Activated B cell treated with CpG ODN at 0.5 μM for 24 hours (primary cell): ENCODE measurements at regions of chr9 and their contacts with region 1.

Region 1: GRCh38 chr9:134163353-134164196 is 789 bp downstream of the RNU6ATAC start:
- DNase-seq: peak; percentile 64
- ATAC-seq: peak; percentile 18
- H3K4me3 Mint-ChIP-seq: no peak overlapping the region
- H3K27ac Mint-ChIP-seq: no peak overlapping the region
- H3K4me1 Mint-ChIP-seq: peaks cover 9% of the 10 kb centered on the region
- H3K27me3 Mint-ChIP-seq: no peaks in the 10 kb centered on the region
- CTCF ChIP-seq: no peak

Region 2: GRCh38 chr9:134024828-134025605 is 138.6 kb before region 1 on chr9 and contains the start of gene BRD3OS:
- CTCF ChIA-PET with region 1: no interaction called
- POLR2A ChIA-PET with region 1: no interaction called
- intact Hi-C with region 1: loop called (anchors 1 kb)
- DNase-seq: peak; percentile 85
- ATAC-seq: peak; percentile 94
- H3K4me3 Mint-ChIP-seq: peak within 1 kb of the TSS; percentile 83
- H3K27ac Mint-ChIP-seq: peak within 1 kb of the TSS; percentile 61
- H3K4me1 Mint-ChIP-seq: peaks cover 16% of the 10 kb centered on the region
- H3K27me3 Mint-ChIP-seq: no peaks in the 10 kb centered on the region
- CTCF ChIP-seq: no peak
- total RNA-seq, gene BRD3OS: 17.3 and 19.3 TPM in 2 replicates

Region 3: DNA sequence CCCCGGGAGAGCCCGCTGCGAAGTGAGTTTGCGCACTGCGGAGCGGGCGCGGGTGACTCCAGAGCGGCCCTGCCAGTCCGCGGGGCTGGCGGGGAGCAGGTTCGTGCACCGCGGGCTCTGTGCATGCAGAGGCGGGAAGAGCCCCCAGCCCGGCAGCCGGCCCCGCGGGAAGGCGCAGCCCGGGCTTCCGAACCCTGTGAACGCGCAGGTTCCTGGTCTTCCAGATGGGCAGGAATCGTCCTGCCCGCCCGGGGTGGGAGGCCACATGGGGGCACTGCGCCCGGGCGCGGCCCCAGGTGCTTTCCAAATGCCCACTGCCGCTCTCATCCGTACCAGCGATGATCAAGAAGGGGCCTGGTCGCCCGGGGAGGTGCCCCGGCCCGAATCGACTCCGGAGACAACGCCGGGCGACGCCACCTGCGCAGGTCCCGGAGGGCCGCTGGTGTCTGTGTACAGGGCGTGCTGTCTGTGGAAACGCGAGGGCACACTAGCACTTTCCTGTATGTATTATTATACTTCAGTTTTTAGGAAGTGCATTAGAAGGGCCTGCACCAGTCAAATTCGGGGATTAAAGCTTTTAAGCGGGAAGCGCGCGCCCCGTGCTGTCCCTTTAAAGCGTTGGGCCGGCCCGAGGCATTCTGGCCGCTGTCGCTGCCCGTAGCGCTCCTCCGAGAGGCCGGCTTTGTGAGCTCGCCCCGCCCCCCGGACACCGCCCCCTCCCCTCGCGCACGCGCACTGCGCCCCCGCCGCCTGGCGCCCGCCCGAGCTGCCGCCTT is 28.0 kb before region 1 on chr9 and contains the start of gene WDR5:
- CTCF ChIA-PET with region 1: interaction called, 8 read pairs
- POLR2A ChIA-PET with region 1: interaction called, 21 read pairs
- intact Hi-C with region 1: loop called (anchors 1 kb)
- DNase-seq: peak; percentile 89
- ATAC-seq: peak; percentile 87
- H3K4me3 Mint-ChIP-seq: peak within 1 kb of the TSS; percentile 89
- H3K27ac Mint-ChIP-seq: peak within 1 kb of the TSS; percentile 90
- H3K4me1 Mint-ChIP-seq: peaks cover 35% of the 10 kb centered on the region
- H3K27me3 Mint-ChIP-seq: no peaks in the 10 kb centered on the region
- CTCF ChIP-seq: no peak
- total RNA-seq, gene WDR5: 20.8 and 22.4 TPM in 2 replicates

Region 4: GRCh38 chr9:134391314-134392231 is 228.0 kb after region 1 on chr9:
- CTCF ChIA-PET with region 1: no interaction called
- POLR2A ChIA-PET with region 1: interaction called, 11 read pairs
- intact Hi-C with region 1: loop called (anchors 1 kb)
- DNase-seq: peak; percentile 62
- ATAC-seq: peak; percentile 59
- H3K4me3 Mint-ChIP-seq: peak overlapping the region; percentile 81
- H3K27ac Mint-ChIP-seq: peak overlapping the region; percentile 98
- H3K4me1 Mint-ChIP-seq: peaks cover 66% of the 10 kb centered on the region
- H3K27me3 Mint-ChIP-seq: no peaks in the 10 kb centered on the region
- CTCF ChIP-seq: no peak

Region 5: GRCh38 chr9:134399435-134400056 is 236.0 kb after region 1 on chr9:
- CTCF ChIA-PET with region 1: no interaction called
- POLR2A ChIA-PET with region 1: interaction called, 11 read pairs
- intact Hi-C with region 1: no loop called
- DNase-seq: no peak
- ATAC-seq: no peak
- H3K4me3 Mint-ChIP-seq: no peak overlapping the region
- H3K27ac Mint-ChIP-seq: no peak overlapping the region
- H3K4me1 Mint-ChIP-seq: peaks cover 47% of the 10 kb centered on the region
- H3K27me3 Mint-ChIP-seq: no peaks in the 10 kb centered on the region
- CTCF ChIP-seq: no peak

Region 6: DNA sequence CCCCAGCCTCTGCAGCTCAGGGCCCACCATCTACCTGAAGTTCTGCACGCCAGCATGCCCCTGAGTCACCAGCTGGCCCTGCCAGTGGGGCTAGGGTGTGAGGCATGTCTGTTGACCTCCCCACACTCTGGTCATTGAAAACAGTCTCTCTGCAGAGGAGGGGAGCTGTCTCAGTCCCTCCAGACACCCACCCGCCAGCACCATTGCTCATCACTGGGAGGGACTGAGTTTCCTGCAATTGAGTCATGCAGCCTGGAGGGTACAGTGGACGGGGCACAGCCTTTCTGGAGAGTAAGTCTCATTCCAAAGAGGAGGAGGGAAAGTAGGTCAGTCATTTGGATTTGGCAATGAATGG is 461.2 kb after region 1 on chr9:
- CTCF ChIA-PET with region 1: no interaction called
- POLR2A ChIA-PET with region 1: no interaction called
- intact Hi-C with region 1: no loop called
- DNase-seq: no peak
- ATAC-seq: no peak
- H3K4me3 Mint-ChIP-seq: no peak overlapping the region
- H3K27ac Mint-ChIP-seq: no peak overlapping the region
- H3K4me1 Mint-ChIP-seq: no peaks in the 10 kb centered on the region
- H3K27me3 Mint-ChIP-seq: peaks cover 8% of the 10 kb centered on the region
- CTCF ChIP-seq: no peak

Region 7: DNA sequence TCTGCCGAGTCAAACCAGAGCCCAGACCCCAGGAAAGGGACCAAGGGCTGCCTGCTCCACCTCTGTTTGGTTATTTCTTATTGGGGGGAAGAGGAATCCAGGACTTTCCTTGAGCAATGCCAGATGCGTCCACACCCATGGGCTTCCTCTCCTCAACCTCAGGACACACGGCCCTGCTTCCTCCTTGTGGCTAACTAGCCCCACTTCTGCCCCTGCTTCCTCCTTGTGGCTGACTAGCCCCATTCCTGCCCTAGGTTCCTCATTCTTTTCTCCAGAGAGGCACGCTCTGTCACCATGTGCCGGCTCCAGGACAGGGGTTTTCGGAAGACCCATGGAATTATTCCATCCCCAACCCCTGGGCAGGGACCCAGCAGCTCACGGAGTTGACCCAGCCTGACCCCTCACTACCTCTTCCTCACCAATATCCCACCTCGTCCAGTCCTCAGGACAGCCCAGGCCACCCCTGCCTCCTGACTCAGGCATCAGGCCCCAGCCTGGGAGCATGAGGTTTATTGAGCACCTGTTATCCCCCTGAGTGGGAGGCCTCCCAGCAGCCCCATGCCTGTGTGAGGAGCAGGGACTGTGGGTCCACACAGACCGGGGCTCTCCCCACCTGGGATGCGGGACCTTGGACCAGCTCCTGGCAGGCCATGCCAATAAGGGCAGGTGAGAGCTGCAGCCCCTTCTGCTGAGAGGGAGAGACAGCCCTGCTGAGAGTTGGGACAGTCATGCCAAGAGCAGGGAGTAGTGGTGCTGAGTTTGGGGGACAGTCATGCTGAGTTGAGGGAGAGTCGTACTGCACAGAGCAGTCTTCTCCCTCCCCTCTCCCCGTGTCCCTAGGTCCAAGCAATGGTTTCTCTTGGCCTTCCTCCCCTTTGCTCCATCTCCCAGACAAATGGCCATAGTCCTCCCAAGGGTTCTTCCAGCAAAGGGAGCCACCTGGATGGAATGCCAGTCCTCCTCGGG is 765.9 kb after region 1 on chr9:
- CTCF ChIA-PET with region 1: no interaction called
- POLR2A ChIA-PET with region 1: no interaction called
- intact Hi-C with region 1: loop called (anchors 10 kb)
- DNase-seq: no peak
- ATAC-seq: peak; percentile 34
- H3K4me3 Mint-ChIP-seq: peak overlapping the region; percentile 49
- H3K27ac Mint-ChIP-seq: peak overlapping the region; percentile 33
- H3K4me1 Mint-ChIP-seq: peaks cover 67% of the 10 kb centered on the region
- H3K27me3 Mint-ChIP-seq: peaks cover 34% of the 10 kb centered on the region
- CTCF ChIP-seq: no peak